H1 (cell line): ENCODE measurements at regions of chr5 and their contacts with region 1.

Region 1: GRCh38 chr5:113123618-113124017 is 147.0 kb downstream of the DCP2 start:
- DNase-seq: no peak
- H3K4me3 ChIP-seq: no peak overlapping the region
- H3K27ac ChIP-seq: no peak overlapping the region
- H3K4me1 ChIP-seq: peaks cover 0 to 2% (median 0%) of the 10 kb centered on the region in 4 experiments; a peak in 1 of 7 replicates
- H3K27me3 ChIP-seq: no peaks in the 10 kb centered on the region
- CTCF ChIP-seq: peak; percentile 14 to 68 (median 57)
- EP300 ChIP-seq: no peak
- POLR2A ChIP-seq: no peak
- RAD21 ChIP-seq: peak; percentile 60 to 73

Region 2: GRCh38 chr5:112886975-112887374 is 236.6 kb before region 1 on chr5:
- CTCF ChIA-PET with region 1: no interaction called
- POLR2A ChIA-PET with region 1: no interaction called
- DNase-seq: no peak
- H3K4me3 ChIP-seq: no peak overlapping the region
- H3K27ac ChIP-seq: no peak overlapping the region
- H3K4me1 ChIP-seq: no peaks in the 10 kb centered on the region
- H3K27me3 ChIP-seq: no peaks in the 10 kb centered on the region
- CTCF ChIP-seq: no peak
- EP300 ChIP-seq: no peak
- POLR2A ChIP-seq: no peak
- RAD21 ChIP-seq: no peak

Region 3: GRCh38 chr5:113029614-113030013 is 94.0 kb before region 1 on chr5:
- CTCF ChIA-PET with region 1: no interaction called
- POLR2A ChIA-PET with region 1: no interaction called
- DNase-seq: no peak
- H3K4me3 ChIP-seq: no peak overlapping the region
- H3K27ac ChIP-seq: no peak overlapping the region
- H3K4me1 ChIP-seq: peaks cover 4 to 10% (median 9%) of the 10 kb centered on the region in 4 experiments
- H3K27me3 ChIP-seq: no peaks in the 10 kb centered on the region
- CTCF ChIP-seq: no peak
- EP300 ChIP-seq: no peak
- POLR2A ChIP-seq: 0 out of 3 replicates have a peak, but pooled peaks of 1 of the 2 experiments have one; percentile 12
- RAD21 ChIP-seq: no peak

Region 4: DNA sequence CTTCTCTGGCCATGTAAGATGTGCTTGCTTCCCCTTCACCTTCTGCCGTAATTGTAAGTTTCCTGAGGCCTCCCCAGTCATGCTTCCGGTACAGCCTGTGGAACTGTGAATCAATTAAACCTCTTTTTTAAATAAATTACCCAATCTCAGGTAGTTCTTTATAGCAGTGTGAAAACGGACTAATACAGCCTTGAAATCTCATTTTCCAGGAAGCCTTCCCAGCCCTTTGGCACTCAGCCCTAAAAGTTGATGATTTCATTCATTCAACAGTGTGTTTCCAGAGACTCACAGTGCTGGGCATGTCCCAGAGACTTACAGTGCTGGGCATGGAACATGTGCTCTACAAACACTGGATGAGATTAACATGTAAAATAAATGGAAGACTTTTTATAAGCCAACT is 11.2 kb before region 1 on chr5:
- CTCF ChIA-PET with region 1: interaction called, 10 read pairs
- POLR2A ChIA-PET with region 1: no interaction called
- DNase-seq: no peak
- H3K4me3 ChIP-seq: no peak overlapping the region
- H3K27ac ChIP-seq: no peak overlapping the region
- H3K4me1 ChIP-seq: no peaks in the 10 kb centered on the region
- H3K27me3 ChIP-seq: no peaks in the 10 kb centered on the region
- CTCF ChIP-seq: no peak
- EP300 ChIP-seq: no peak
- POLR2A ChIP-seq: no peak
- RAD21 ChIP-seq: no peak

Region 5: DNA sequence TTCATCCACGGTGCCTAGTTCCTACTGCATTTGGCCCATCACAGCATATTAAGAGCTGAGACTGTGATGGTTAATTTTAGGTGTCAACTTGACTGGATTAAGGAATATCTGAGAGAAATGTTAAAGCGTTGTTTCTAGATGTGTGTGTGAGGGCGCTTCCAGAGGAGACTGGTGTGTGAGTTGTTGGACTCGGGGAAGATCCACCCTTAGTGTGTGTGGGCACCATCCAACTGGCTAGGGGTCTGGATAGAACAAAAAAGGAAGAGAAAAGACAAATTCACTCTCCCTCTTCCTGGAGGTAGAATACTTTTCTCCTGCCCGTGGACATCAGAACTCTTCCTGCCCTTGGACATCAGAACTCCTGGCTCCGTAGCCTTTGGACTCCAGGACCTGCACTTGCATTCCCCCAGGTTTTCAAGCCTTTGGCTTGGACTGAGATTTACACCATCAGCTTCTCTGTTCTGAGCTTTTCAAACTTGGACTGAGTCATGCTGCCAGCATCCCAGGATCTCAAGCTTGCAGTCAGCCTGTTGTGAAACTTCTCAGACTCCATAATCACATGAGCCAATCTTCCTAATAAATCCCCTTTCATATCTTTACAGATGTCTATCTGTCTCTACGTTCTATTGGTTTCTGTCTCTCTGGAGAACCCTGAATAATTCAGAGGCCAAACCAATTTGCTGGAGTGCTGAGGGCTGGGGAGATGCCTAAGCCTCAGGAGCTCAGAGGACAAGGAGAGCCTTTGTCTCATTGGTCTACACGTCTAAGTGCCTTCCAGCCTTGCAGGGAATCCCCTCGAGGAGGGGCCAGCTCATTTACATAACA is 17.4 kb after region 1 on chr5:
- CTCF ChIA-PET with region 1: interaction called, 21 read pairs
- POLR2A ChIA-PET with region 1: no interaction called
- DNase-seq: peak in 1 of 2 experiments; percentile 24
- H3K4me3 ChIP-seq: no peak overlapping the region
- H3K27ac ChIP-seq: no peak overlapping the region
- H3K4me1 ChIP-seq: no peaks in the 10 kb centered on the region
- H3K27me3 ChIP-seq: no peaks in the 10 kb centered on the region; a peak in 1 of 7 replicates
- CTCF ChIP-seq: no peak
- EP300 ChIP-seq: no peak
- POLR2A ChIP-seq: no peak
- RAD21 ChIP-seq: no peak

Region 6: DNA sequence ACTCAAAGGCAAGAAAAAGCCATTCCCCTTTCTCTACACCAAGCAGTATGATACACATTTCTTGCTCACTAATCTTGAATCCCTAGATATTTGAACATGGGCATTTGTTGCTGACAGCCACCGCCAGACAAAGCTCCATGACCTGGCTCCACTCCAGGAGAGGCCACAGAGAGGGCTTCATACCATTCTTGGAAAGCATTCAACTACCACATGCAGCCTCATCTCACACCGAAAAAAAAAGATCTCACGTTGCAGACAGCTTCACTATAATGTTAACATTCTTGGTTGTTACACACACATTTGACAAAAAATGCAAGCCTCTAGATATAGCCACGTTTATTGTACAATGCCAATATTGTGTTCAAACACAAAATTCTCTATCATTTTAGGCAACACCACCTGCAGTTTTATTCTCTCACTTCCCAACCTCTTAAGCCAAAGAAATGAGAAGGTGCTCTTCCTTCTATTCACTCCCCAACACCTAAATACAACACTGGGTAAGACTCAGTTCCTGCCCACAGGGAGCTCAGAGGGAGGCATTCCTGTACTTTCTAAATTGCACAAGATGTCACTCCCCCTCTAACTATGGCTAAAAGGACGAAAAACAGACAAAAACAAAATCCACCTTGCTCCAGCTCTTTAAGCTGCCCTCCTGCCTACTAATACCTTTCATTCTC is 88.8 kb after region 1 on chr5:
- CTCF ChIA-PET with region 1: no interaction called
- POLR2A ChIA-PET with region 1: no interaction called
- DNase-seq: no peak
- H3K4me3 ChIP-seq: no peak overlapping the region
- H3K27ac ChIP-seq: no peak overlapping the region
- H3K4me1 ChIP-seq: peaks cover 0 to 28% (median 15%) of the 10 kb centered on the region in 4 experiments; a peak in 5 of 7 replicates
- H3K27me3 ChIP-seq: no peaks in the 10 kb centered on the region
- CTCF ChIP-seq: no peak
- EP300 ChIP-seq: no peak
- POLR2A ChIP-seq: no peak
- RAD21 ChIP-seq: no peak

Region 7: DNA sequence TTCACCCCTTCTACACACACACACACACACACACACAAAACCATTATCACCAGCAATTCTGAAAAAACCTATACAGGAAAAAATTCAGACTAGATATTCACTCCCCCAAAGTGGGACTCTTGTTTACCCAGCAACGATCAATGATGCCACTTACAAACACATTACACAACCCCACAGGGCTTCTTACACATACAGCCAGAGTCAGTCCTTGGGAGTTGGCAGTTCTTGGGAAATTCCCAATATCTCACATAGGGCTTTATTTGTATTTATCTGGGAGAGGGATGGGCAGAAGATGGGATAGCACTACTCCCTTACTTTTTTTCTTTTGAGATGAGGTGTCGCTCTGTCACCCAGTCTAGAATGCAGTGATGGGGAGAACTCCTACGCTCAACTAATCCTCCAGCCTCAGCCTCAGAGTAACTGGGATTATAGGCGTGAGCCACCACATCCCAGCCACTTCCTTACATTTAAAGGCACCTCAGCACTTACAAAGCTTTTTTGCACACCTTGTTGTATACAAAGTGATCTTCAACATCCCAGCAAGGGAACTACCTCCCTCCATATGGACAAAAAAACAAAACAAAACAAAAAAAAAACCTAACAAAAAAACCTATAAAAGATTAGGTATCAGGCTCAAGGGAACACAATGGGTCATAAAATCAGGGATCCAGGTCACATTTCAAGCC is 142.8 kb after region 1 on chr5:
- CTCF ChIA-PET with region 1: no interaction called
- POLR2A ChIA-PET with region 1: no interaction called
- DNase-seq: no peak
- H3K4me3 ChIP-seq: no peak overlapping the region
- H3K27ac ChIP-seq: no peak overlapping the region
- H3K4me1 ChIP-seq: peaks cover 2 to 27% (median 20%) of the 10 kb centered on the region in 4 experiments; a peak in 5 of 7 replicates
- H3K27me3 ChIP-seq: peaks cover 0 to 1% (median 0%) of the 10 kb centered on the region in 4 experiments; a peak in 2 of 7 replicates
- CTCF ChIP-seq: no peak
- EP300 ChIP-seq: no peak
- POLR2A ChIP-seq: no peak
- RAD21 ChIP-seq: no peak